Heart right ventricle (tissue), 16 donors: ENCODE measurements at regions of chr2 and their contacts with region 1.

Region 1: DNA sequence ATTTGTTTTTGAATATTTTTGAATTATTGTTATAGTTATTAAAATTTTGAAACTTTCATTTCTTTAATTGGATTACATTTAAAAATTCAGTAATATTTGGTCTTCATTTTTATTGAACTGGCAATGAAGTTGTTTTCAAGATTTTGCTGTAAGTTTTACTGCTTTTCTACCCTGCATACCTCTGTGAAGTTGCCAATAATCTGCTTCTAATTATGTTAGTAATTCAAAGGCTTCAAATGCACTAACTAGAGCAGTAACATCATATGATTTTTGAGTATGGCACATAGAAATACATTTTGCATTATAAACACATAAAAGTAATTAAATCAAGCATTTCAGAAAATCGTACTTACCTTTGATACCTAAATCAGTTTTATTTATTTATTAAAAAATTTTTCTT is 40.3 kb upstream of the FAM171B start:
- DNase-seq: no peak
- ATAC-seq: no peak
- H3K4me3 ChIP-seq: no peak overlapping the region
- H3K27ac ChIP-seq: no peak overlapping the region
- H3K4me1 ChIP-seq: peaks cover 0 to 7% (median 0%) of the 10 kb centered on the region in 9 donors
- H3K27me3 ChIP-seq: no peaks in the 10 kb centered on the region
- CTCF ChIP-seq: no peak

Region 2: DNA sequence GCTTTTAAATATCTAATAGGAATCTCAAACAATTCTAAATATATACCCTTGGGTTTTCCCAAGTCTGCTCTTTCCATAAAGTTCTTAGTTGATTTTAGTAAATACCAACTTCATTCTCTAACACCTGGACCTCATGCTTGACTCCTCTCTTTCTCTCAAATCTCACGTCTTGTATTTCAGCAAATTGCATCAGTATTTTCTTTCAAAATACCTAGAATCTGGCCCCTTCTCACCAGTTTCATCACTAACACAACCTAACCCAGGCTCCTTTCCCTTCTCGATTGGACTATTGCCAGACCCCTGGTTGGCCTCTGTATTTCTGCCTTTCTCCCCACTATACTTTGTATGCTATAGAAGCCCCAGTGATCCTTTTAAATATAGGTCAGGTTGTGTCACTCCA is 17.3 kb after region 1 on chr2:
- intact Hi-C with region 1: loop called in 1 of 10 experiments (anchors 2 kb)
- DNase-seq: no peak
- ATAC-seq: no peak
- H3K4me3 ChIP-seq: no peak overlapping the region
- H3K27ac ChIP-seq: no peak overlapping the region
- H3K4me1 ChIP-seq: no peaks in the 10 kb centered on the region
- H3K27me3 ChIP-seq: no peaks in the 10 kb centered on the region
- CTCF ChIP-seq: no peak

Region 3: DNA sequence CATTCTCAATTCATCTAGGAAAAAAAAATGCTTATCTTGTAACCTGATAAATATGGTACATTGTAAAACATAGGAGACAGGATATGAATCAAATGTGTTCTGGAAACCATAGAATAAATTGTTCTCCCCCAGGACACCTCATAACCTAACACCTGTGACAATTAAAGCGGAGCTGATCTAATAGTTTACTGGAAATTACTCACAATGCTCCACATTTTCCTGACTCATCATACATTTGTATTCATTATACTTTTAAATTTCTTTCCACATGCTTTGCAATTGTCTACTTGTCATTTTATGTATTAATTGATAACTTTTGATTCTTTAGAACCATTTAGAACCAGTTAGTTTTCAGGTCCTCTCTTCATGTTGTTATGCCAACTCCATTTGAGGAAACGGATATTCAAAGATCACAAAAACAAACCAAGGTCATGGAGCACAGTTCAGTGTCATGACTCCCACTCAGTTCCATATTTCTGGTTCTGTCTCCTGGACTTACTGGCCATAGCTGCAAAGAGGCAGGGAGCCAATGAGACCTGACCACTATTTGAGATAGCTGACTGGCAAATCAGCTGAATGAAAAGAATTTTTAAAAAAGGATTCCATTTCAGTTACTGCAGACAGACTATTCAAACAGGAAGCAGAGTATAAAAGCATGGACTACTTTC is 666.1 kb after region 1 on chr2:
- intact Hi-C with region 1: no loop called
- DNase-seq: no peak
- ATAC-seq: peak in 2 of 8 donors; percentile 42 to 55
- H3K4me3 ChIP-seq: no peak overlapping the region
- H3K27ac ChIP-seq: peak overlapping the region in 1 of 10 donors; percentile 34
- H3K4me1 ChIP-seq: peaks cover 0 to 23% (median 4%) of the 10 kb centered on the region in 9 donors
- H3K27me3 ChIP-seq: no peaks in the 10 kb centered on the region
- CTCF ChIP-seq: no peak